Endothelial cell of umbilical vein (primary cell): ENCODE measurements at regions of chr15 and their contacts with region 1.

Region 1: DNA sequence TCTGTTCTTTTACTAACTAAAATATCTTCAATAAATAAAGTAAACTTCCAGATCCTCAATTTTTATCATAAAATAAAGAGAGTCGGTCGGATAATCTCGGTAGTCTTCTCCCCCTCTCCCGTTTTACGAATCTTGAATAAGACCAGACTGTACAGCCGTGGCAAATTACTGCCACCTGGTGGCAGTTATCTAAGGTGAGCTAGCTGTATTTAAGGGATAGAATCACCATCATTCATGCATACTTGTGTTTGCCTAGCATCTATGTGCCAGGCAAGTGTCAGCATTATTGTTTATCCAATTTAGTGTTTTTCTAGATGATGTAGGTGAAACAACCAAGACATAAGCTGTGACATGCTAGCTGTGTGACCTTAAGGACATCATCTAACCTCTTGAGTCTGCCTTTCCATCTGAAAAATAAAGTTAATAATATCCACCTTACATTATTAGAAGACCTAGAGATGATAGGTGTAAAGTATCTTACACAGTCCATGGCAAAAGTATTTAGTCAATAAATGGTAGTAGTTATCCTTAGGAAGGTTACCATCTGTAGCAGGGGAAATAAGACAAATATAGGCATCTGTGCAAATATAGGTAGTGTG is 21.3 kb downstream of the DUT start:
- DNase-seq: peak; percentile 67
- H3K4me3 ChIP-seq: no peak overlapping the region
- H3K27ac ChIP-seq: no peak overlapping the region
- H3K4me1 ChIP-seq: no peaks in the 10 kb centered on the region
- H3K27me3 ChIP-seq: no peaks in the 10 kb centered on the region
- CTCF ChIP-seq: peak; percentile 68 to 69
- POLR2A ChIP-seq: no peak

Region 2: DNA sequence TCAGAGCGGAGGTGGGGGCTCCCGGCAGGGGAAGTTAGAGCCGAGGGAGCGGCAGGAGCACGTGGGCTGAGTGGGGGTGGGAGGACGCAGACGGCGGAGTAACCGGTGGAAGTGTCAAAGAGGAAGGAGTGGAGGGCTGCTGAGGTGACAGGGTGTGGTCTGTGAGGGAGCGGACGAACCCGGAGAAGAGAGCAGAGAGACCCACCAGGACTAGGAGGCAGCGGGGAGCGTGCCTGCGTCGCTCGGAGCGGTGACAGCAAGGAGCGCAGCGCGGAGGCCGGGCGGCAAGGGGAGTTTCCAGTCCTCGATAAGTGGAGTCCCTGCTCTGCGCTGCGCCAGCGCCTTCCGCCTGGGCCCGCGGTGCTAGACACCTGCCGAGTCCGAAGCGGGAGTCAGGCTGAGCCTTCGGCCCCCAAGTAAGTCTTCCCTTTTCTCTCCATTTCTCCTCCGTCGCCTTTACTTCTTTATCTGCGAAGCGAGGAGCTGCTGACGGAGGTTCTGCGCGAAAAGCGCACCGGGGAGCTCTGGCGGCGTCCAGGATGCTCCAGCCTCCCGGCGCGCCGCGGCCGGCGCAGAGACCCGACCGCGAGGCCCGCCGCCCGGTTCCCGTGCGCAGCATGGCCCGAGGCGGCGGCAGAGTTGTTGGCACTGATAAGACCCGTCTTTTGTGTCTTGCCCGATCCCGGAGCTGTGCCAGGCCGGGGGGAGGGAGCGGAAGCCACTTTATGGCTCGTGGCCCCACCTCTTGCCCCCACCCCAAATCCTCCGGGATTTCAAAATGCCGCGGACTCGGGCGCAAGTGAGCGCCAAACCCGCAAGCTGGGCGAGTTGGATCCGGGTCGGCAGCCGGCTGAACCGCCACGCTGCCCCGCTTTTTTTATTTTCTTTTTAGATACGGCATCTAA is 1168.3 kb before region 1 on chr15:
- CTCF ChIA-PET with region 1: no interaction called
- POLR2A ChIA-PET with region 1: no interaction called
- dilution Hi-C with region 1: no loop called
- intact Hi-C with region 1: loop called (anchors 1 kb)
- DNase-seq: peak; percentile 62
- H3K4me3 ChIP-seq: peak overlapping the region; percentile 57 to 76 (median 72)
- H3K27ac ChIP-seq: peak overlapping the region; percentile 70
- H3K4me1 ChIP-seq: peaks cover 24% of the 10 kb centered on the region
- H3K27me3 ChIP-seq: no peaks in the 10 kb centered on the region
- CTCF ChIP-seq: no peak
- POLR2A ChIP-seq: no peak

Region 3: GRCh38 chr15:48233246-48233645 is 119.3 kb before region 1 on chr15:
- CTCF ChIA-PET with region 1: no interaction called
- POLR2A ChIA-PET with region 1: no interaction called
- dilution Hi-C with region 1: no loop called
- intact Hi-C with region 1: no loop called
- DNase-seq: no peak
- H3K4me3 ChIP-seq: no peak overlapping the region
- H3K27ac ChIP-seq: no peak overlapping the region
- H3K4me1 ChIP-seq: no peaks in the 10 kb centered on the region
- H3K27me3 ChIP-seq: peaks cover 2 to 4% of the 10 kb centered on the region in 2 experiments
- CTCF ChIP-seq: no peak
- POLR2A ChIP-seq: no peak